Mammary epithelial cell (primary cell): ENCODE measurements at regions of chr11 and their contacts with region 1.

Region 1: DNA sequence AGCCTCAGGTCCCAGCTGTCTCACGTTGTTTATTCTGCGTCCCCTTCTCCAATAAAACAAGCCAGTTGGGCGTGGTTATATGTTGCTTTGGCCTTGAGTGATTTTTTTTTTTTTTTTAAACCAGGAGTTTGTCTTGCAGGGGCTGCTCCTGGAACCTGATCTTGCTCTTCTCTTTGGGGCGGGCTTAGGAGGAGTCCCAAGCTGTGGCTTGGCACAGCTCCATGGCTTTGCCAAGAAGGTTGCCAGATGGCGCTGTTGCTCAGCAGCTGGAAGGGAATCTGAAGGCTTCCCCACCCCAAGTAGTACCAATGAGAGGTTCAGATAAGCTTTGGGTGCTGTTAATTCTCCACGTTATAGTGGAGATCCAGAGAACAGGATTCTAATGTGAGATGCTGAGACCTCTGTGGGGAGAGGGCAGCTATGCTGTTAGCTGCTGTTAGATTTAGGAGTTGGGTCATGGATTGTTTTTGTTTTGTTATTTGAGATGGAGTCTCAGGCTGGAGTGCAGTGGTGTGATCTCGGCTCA is 2.0 kb upstream of the FERMT3 start:
- DNase-seq: peak; percentile 81
- H3K4me3 ChIP-seq: no peak overlapping the region
- H3K27ac ChIP-seq: no peak overlapping the region
- H3K4me1 ChIP-seq: peaks cover 5% of the 10 kb centered on the region
- H3K27me3 ChIP-seq: no peaks in the 10 kb centered on the region
- CTCF ChIP-seq: peak; percentile 80 to 91

Region 2: DNA sequence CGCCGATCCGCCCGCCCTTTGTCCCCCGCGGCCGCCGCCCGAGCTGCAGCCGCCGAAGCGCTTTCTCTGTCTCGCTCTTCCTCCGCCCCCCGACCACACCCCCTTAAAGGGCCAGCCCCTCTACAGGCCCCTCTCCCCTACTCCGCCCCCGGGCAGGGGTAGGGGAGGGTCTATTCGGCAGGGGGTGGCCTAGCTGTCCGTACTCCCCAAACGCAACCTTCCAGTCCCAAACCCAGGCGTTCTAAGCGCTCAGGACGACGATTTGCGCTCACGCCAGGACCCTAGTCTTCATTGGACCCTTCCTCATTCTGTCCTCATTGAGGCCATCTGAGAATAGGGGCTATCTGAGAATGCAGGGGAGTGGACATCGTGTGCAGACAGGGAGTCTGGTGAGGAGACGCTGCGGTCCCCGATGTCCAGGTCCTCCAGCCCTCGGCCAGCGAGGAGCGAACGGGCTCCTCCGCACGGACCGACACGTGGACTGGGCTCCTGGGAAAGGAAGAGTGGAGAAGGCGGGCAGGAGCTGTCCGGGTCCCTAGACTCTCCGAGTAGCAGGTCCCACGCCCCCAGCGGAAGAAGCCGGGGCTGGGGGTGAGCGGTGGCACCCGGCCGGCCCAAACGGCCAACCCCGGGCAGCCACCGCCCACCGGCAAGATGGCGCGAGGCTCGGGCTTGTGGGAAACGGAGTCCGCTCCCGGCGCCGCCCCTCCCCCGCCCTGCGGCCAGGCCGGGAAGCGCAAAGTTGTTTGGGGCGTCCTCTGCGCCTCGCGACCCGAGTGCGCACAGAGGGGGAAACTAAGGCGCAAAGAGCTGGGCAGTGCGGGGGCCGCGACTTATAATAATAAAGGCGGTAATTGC is 42.6 kb after region 1 on chr11 and contains the start of gene PPP1R14B:
- CTCF ChIA-PET with region 1: interaction called, 31 read pairs
- dilution Hi-C with region 1: no loop called
- in situ Hi-C with region 1: no loop called
- intact Hi-C with region 1: loop called (anchors 1 kb)
- DNase-seq: peak; percentile 81
- H3K4me3 ChIP-seq: peak within 1 kb of the TSS; percentile 79 to 84 (median 82)
- H3K27ac ChIP-seq: peak within 1 kb of the TSS; percentile 77
- H3K4me1 ChIP-seq: peaks cover 41% of the 10 kb centered on the region
- H3K27me3 ChIP-seq: no peaks in the 10 kb centered on the region
- CTCF ChIP-seq: peak in 1 of 2 donors; percentile 15
- total RNA-seq, gene PPP1R14B: 118 to 362 TPM

Region 3: GRCh38 chr11:64252003-64252872 is 47.7 kb after region 1 on chr11:
- CTCF ChIA-PET with region 1: interaction called, 31 read pairs
- dilution Hi-C with region 1: no loop called
- in situ Hi-C with region 1: no loop called
- intact Hi-C with region 1: loop called (anchors 1 kb)
- DNase-seq: peak; percentile 69
- H3K4me3 ChIP-seq: peak overlapping the region; percentile 58 to 96 (median 83)
- H3K27ac ChIP-seq: peak overlapping the region; percentile 63
- H3K4me1 ChIP-seq: peaks cover 29% of the 10 kb centered on the region
- H3K27me3 ChIP-seq: no peaks in the 10 kb centered on the region
- CTCF ChIP-seq: peak; percentile 40 to 59

Region 4: GRCh38 chr11:64263021-64263946 is 58.8 kb after region 1 on chr11:
- CTCF ChIA-PET with region 1: no interaction called
- dilution Hi-C with region 1: loop called (anchors 5 kb)
- in situ Hi-C with region 1: no loop called
- intact Hi-C with region 1: no loop called
- DNase-seq: peak; percentile 61
- H3K4me3 ChIP-seq: no peak overlapping the region
- H3K27ac ChIP-seq: no peak overlapping the region
- H3K4me1 ChIP-seq: peaks cover 28% of the 10 kb centered on the region
- H3K27me3 ChIP-seq: no peaks in the 10 kb centered on the region
- CTCF ChIP-seq: no peak

Region 5: DNA sequence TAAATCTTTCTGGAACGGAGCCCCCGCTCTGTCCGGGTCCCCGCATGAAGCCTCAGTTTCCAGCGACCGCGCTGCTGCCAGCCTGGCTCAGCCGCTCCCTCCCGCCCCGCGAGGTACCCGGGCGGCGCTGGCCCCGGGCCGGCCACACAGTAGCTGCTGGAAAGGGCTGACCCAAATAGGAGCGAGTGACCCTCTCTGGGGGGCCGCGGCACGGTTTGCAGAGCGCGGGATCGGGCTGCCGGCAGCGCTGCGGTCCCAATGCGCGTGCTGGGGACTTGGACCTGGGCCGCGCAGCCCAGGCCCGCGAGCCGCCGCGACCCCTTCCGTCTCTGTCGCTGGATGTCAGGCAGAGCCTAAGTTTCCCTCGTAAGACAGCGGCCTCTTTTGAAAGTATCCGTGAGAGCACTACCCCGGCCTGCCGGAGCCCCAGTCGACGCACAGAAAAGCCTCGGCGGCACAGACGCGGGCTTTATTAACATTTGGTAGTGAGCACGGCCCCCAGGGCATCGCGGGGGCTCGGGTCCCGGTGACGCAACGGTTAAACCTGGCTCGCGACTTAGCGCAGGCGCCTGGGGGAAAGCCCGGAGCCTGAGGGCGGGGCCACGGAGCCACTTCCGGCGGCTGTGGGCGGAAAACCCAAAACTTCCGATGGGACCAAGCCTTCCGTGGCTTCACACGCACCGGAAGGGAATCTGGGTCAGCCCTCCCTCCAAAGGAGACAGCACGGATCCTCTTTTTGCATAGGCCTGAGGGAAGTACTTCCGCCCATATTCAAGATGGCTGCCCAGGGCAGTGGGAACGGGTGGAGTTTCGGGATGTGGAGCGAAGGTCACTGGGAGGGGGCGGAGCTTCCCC is 65.1 kb after region 1 on chr11:
- CTCF ChIA-PET with region 1: interaction called, 4 read pairs
- dilution Hi-C with region 1: loop called (anchors 5 kb)
- in situ Hi-C with region 1: no loop called
- intact Hi-C with region 1: loop called (anchors 1 kb)
- DNase-seq: peak; percentile 99
- H3K4me3 ChIP-seq: peak overlapping the region; percentile 57 to 70 (median 59)
- H3K27ac ChIP-seq: peak overlapping the region; percentile 62
- H3K4me1 ChIP-seq: peaks cover 41% of the 10 kb centered on the region
- H3K27me3 ChIP-seq: no peaks in the 10 kb centered on the region
- CTCF ChIP-seq: peak in 1 of 2 donors; percentile 24